ENCODE measurements at regions of chr1 and their contacts with region 1.

Region 1: DNA sequence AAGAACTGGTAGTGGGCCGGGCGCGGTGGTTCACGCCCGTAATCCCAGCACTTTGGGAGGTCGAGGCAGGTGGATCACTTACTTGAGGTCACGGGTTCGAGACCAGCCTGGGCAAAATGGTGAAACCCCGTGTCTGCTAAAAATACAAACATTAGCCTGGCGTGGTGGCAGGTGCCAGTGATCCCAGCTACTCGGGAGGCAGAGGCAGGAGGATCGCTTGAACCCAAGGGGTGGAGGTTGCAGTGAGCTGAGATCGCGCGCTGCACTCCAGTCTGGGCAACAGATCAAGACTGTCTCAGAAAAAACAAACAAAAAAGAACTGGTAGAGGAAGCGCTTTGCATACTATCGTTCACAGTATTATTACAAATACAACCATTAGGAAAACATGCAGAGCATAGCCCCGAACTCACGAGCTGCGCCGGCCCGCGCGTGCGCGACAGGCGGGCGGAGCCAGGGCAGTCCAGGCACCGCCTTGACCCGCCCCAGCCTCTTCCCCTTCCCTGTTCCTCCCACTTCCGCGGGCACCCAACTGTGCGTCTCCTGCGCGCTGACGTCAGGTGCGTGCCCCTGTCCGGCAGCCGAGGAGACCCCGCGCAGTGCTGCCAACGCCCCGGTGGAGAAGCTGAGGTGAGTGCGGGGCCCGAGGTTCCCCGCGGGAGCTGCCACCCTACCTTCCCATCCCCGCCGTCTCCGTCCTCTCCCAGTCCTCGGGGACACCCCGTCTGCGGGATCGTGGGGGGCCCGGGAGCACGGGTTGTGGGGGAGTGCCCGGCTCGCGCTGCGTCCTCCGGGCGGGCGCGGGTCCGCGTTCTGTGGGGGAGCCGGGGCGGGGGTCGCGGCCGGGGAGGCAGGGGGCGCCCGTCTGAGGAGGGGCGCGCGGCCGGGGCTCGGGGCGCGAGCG is at the start of gene CDC42:
- DNase-seq: peak; percentile 98
- ATAC-seq: peak; percentile 92
- H3K4me3 Mint-ChIP-seq: peak within 1 kb of the TSS; percentile 98
- H3K27ac Mint-ChIP-seq: peak within 1 kb of the TSS; percentile 98
- H3K4me1 Mint-ChIP-seq: peaks cover 62% of the 10 kb centered on the region
- H3K27me3 Mint-ChIP-seq: no peaks in the 10 kb centered on the region
- CTCF ChIP-seq: no peak
- total RNA-seq, gene CDC42: 292 to 310 TPM

Region 2: GRCh38 chr1:22039594-22040285 is 12.6 kb before region 1 on chr1:
- CTCF ChIA-PET with region 1: interaction called, 12 read pairs
- POLR2A ChIA-PET with region 1: interaction called, 39 read pairs
- intact Hi-C with region 1: no loop called
- DNase-seq: peak; percentile 96
- ATAC-seq: peak; percentile 97
- H3K4me3 Mint-ChIP-seq: peak overlapping the region; percentile 72
- H3K27ac Mint-ChIP-seq: peak overlapping the region; percentile 95
- H3K4me1 Mint-ChIP-seq: peaks cover 47% of the 10 kb centered on the region
- H3K27me3 Mint-ChIP-seq: no peaks in the 10 kb centered on the region
- CTCF ChIP-seq: no peak

Region 3: DNA sequence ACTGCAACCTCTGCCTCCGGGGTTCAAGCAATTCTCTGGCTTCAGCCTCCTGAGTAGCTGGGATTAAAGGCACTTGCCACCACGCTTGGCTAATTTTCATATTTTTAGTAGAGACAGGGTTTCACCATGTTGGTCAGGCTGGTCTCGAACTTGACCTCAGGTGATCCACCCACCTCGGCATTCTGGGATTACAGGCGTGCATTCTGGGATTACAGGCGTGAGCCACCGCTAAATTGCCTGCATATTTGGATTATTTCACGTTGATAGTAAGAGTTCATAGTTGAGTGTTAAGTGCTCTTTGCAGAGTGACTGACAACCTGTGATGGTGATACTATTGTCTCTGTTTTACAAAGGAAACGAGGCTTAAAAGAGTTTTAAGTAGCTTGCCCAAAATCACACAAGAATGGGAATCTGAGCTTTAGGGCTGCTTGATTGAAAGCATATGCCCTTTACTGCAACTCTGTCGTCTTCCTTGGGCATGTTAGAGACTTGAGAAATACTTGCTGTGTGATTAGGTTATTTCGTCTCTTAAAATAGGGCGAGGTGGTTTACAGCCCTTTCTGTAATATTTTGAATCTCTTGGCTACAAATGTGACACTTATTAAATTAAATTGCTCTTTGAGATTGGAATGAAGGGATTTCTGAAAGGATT is 12.5 kb after region 1 on chr1:
- CTCF ChIA-PET with region 1: no interaction called
- POLR2A ChIA-PET with region 1: interaction called, 11 read pairs
- intact Hi-C with region 1: no loop called
- DNase-seq: no peak
- ATAC-seq: no peak
- H3K4me3 Mint-ChIP-seq: no peak overlapping the region
- H3K27ac Mint-ChIP-seq: peak overlapping the region; percentile 72
- H3K4me1 Mint-ChIP-seq: peaks cover 81% of the 10 kb centered on the region
- H3K27me3 Mint-ChIP-seq: no peaks in the 10 kb centered on the region
- CTCF ChIP-seq: no peak

Region 4: GRCh38 chr1:22071511-22071910 is 19.1 kb after region 1 on chr1:
- CTCF ChIA-PET with region 1: interaction called, 3 read pairs
- POLR2A ChIA-PET with region 1: interaction called, 15 read pairs
- intact Hi-C with region 1: no loop called
- DNase-seq: no peak
- ATAC-seq: no peak
- H3K4me3 Mint-ChIP-seq: no peak overlapping the region
- H3K27ac Mint-ChIP-seq: peak overlapping the region; percentile 70
- H3K4me1 Mint-ChIP-seq: peaks cover 74% of the 10 kb centered on the region
- H3K27me3 Mint-ChIP-seq: no peaks in the 10 kb centered on the region
- CTCF ChIP-seq: no peak

Region 5: GRCh38 chr1:22089787-22090186 is 37.4 kb after region 1 on chr1:
- CTCF ChIA-PET with region 1: interaction called, 3 read pairs
- POLR2A ChIA-PET with region 1: interaction called, 11 read pairs
- intact Hi-C with region 1: loop called (anchors 5 kb)
- DNase-seq: no peak
- ATAC-seq: no peak
- H3K4me3 Mint-ChIP-seq: peak overlapping the region; percentile 58
- H3K27ac Mint-ChIP-seq: peak overlapping the region; percentile 81
- H3K4me1 Mint-ChIP-seq: peaks cover 83% of the 10 kb centered on the region
- H3K27me3 Mint-ChIP-seq: no peaks in the 10 kb centered on the region
- CTCF ChIP-seq: no peak

Region 6: DNA sequence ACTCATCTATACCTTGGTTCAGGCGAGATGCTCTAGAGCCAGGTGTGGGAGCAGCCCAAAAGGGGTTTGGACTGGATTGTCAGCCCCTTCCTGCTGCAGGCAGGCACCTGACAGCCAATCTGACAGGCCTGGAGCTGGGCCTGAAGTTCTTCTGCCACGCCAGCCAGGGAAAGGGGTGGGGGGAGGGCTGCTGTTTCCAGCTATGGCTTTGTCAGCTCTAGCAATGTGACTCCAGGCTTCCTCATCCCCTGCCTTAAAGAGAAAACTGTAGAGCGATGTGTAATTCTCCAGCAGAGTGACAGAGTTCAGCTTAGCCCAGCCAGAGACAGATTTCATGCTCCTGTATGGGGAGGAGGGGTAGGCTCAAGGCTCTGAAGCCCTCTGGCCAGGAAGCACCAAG is 60.2 kb after region 1 on chr1:
- CTCF ChIA-PET with region 1: no interaction called
- POLR2A ChIA-PET with region 1: no interaction called
- intact Hi-C with region 1: no loop called
- DNase-seq: no peak
- ATAC-seq: no peak
- H3K4me3 Mint-ChIP-seq: no peak overlapping the region
- H3K27ac Mint-ChIP-seq: no peak overlapping the region
- H3K4me1 Mint-ChIP-seq: peaks cover 14% of the 10 kb centered on the region
- H3K27me3 Mint-ChIP-seq: no peaks in the 10 kb centered on the region
- CTCF ChIP-seq: no peak

Region 7: GRCh38 chr1:22131875-22132486 is 79.6 kb after region 1 on chr1:
- CTCF ChIA-PET with region 1: no interaction called
- POLR2A ChIA-PET with region 1: no interaction called
- intact Hi-C with region 1: no loop called
- DNase-seq: peak; percentile 74
- ATAC-seq: peak; percentile 87
- H3K4me3 Mint-ChIP-seq: no peak overlapping the region
- H3K27ac Mint-ChIP-seq: no peak overlapping the region
- H3K4me1 Mint-ChIP-seq: no peaks in the 10 kb centered on the region
- H3K27me3 Mint-ChIP-seq: no peaks in the 10 kb centered on the region
- CTCF ChIP-seq: peak; percentile 87

Region 8: DNA sequence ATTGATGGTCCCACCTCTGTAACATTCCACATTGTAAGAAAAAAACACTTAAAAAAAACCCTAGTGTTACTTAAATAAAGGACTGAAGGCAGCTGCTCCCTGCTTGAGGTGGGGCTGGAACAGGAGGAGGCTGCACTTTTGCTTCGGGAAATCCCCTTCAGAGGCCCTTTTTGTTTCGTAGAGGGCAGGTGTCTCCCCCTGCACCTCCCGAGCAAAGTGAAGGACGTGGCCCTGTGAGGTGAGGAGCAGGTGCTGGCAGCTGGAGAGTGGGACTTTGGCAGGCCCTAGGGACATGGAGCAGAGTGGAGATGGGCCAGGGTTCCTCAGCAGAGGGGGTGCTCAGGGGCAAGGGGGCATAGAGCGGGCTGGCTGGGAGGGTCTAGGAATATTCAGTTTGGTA is 123.9 kb after region 1 on chr1:
- CTCF ChIA-PET with region 1: no interaction called
- POLR2A ChIA-PET with region 1: no interaction called
- intact Hi-C with region 1: no loop called
- DNase-seq: peak; percentile 64
- ATAC-seq: peak; percentile 94
- H3K4me3 Mint-ChIP-seq: no peak overlapping the region
- H3K27ac Mint-ChIP-seq: no peak overlapping the region
- H3K4me1 Mint-ChIP-seq: peaks cover 17% of the 10 kb centered on the region
- H3K27me3 Mint-ChIP-seq: peaks cover 4% of the 10 kb centered on the region
- CTCF ChIP-seq: no peak

Region 9: DNA sequence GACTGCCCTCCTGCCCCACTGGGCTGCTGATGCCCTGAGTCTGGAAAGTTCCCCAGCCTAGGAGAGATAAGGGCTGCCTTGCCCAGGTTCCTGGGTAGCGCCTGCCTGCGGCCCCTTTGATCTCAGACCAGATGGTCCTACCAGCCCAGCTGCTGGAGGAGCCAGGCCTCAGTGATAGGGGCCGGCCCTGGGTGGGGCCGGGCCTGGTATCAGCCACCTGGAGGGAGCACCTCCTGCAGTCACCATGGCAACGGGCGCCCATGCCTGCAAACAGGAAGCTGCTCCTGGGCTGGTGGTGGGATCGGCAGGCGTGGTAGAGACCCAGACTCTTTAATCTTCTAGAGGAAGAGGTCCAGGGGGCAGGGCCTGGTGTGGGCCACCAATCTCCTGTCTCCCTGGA is 210.2 kb after region 1 on chr1:
- CTCF ChIA-PET with region 1: no interaction called
- POLR2A ChIA-PET with region 1: no interaction called
- intact Hi-C with region 1: no loop called
- DNase-seq: no peak
- ATAC-seq: no peak
- H3K4me3 Mint-ChIP-seq: no peak overlapping the region
- H3K27ac Mint-ChIP-seq: no peak overlapping the region
- H3K4me1 Mint-ChIP-seq: no peaks in the 10 kb centered on the region
- H3K27me3 Mint-ChIP-seq: peaks cover 3% of the 10 kb centered on the region
- CTCF ChIP-seq: no peak